ENCODE measurements at regions of chr16 and their contacts with region 1.

Region 1: GRCh38 chr16:30032083-30032819 is 1.2 kb upstream of the TLCD3B start:
- DNase-seq: peak; percentile 86
- ATAC-seq: peak; percentile 55
- H3K4me3 Mint-ChIP-seq: peak overlapping the region; percentile 79
- H3K27ac Mint-ChIP-seq: no peak overlapping the region
- H3K4me1 Mint-ChIP-seq: peaks cover 35% of the 10 kb centered on the region
- H3K27me3 Mint-ChIP-seq: peaks cover 50% of the 10 kb centered on the region
- CTCF ChIP-seq: peak; percentile 89

Region 2: GRCh38 chr16:29790183-29790952 is 241.9 kb before region 1 on chr16 and contains the start of gene KIF22:
- CTCF ChIA-PET with region 1: interaction called, 13 read pairs
- POLR2A ChIA-PET with region 1: interaction called, 3 read pairs
- DNase-seq: peak; percentile 100
- ATAC-seq: peak; percentile 96
- H3K4me3 Mint-ChIP-seq: peak within 1 kb of the TSS; percentile 98
- H3K27ac Mint-ChIP-seq: peak within 1 kb of the TSS; percentile 97
- H3K4me1 Mint-ChIP-seq: peaks cover 25% of the 10 kb centered on the region
- H3K27me3 Mint-ChIP-seq: peaks cover 19% of the 10 kb centered on the region
- CTCF ChIP-seq: no peak
- total RNA-seq, gene KIF22: 165 to 182 TPM (median 175 TPM) in 3 replicates

Region 3: GRCh38 chr16:29848420-29849297 is 183.6 kb before region 1 on chr16:
- CTCF ChIA-PET with region 1: interaction called, 37 read pairs
- POLR2A ChIA-PET with region 1: no interaction called
- DNase-seq: peak; percentile 86
- ATAC-seq: peak; percentile 79
- H3K4me3 Mint-ChIP-seq: no peak overlapping the region
- H3K27ac Mint-ChIP-seq: no peak overlapping the region
- H3K4me1 Mint-ChIP-seq: peaks cover 10% of the 10 kb centered on the region
- H3K27me3 Mint-ChIP-seq: no peaks in the 10 kb centered on the region; the same call in 1 of the 2 replicates
- CTCF ChIP-seq: peak; percentile 78

Region 4: DNA sequence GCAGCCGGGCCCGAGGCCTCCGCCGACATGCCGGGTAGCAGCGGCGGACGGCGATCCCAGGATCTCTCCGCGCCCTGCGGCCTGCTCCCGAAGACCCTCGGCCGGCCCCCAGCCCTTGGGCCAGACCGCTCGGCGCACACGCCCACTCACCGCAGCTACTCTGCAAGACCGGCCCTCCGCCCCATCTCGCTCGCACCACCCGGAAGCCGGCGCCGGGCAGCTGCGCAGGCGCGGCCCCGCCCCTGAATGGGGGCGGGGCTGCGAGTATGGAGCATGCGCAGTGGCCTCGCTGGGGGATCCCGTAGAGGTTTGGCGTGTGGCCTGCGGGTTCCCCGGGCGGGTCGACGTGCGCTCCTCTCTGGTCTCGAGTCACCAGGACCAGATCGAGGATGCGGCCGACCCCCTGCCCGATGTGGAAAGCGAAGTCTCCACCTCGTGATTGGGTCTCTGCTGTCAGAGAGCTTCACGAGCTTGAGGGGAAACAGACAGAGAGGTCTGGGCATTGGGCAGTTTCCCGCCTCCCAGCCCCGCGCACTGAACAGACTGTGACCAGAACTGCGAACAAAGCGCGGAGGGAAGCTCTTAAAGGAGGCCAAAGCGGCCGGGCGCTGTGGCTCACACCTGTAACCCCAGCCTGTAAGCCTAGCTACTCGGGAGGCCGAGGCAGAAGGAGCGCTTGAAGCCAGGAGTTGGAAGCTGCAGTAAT is 106.1 kb before region 1 on chr16 and contains the start of gene KCTD13:
- CTCF ChIA-PET with region 1: interaction called, 16 read pairs
- POLR2A ChIA-PET with region 1: no interaction called
- DNase-seq: peak; percentile 91
- ATAC-seq: peak; percentile 95
- H3K4me3 Mint-ChIP-seq: peak within 1 kb of the TSS; percentile 93
- H3K27ac Mint-ChIP-seq: peak within 1 kb of the TSS; percentile 97
- H3K4me1 Mint-ChIP-seq: peaks cover 18% of the 10 kb centered on the region
- H3K27me3 Mint-ChIP-seq: no peaks in the 10 kb centered on the region; the same call in 1 of the 2 replicates
- CTCF ChIP-seq: no peak
- total RNA-seq, gene KCTD13: 18.5 to 20.9 TPM (median 19.4 TPM) in 3 replicates

Region 5: DNA sequence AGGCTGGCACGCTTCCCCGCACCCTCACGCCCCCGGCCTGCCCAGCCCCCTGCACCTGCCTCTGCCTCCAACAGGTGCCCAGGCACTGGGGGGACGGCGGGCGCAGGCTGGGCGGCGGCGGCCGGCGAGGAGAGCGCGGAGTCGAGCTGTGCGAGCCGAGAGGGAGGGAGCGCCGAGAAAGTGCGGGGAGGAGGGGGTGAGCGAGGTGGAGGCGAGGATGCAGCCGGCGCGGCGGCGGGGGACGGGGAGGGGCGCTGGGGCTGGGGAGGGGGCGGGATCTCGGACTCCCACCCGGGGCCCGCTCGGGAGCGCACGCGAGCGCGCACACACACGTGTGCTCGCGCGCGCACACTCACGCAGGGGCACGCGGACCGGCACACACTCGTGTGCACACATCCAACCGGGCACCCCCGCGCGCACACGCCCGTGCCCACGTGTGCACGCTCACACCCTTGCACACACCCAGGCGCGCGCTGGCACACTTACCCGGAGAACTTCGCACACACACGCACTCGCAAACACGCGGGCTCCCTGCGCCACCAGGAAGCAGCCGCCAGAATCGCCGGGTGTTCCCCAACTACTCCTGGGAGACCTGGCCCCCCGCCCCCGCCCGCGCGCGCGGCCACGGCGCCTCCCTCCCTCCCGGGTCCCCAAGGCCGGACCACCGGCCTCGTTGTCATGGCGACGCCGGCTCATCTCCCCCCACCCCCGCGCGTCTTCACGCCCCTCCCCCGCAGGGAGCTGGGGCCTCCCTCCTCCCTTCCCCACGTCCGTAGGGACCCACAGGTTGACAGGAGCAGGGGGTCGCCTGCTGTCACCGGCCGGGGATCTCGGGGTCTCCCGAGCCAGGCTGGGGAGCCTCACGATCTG is 21.2 kb before region 1 on chr16 and contains the start of gene DOC2A:
- CTCF ChIA-PET with region 1: interaction called, 29 read pairs
- POLR2A ChIA-PET with region 1: no interaction called
- DNase-seq: peak; percentile 73
- ATAC-seq: peak; percentile 51
- H3K4me3 Mint-ChIP-seq: peak within 1 kb of the TSS; percentile 88
- H3K27ac Mint-ChIP-seq: no peak within 1 kb of the TSS
- H3K4me1 Mint-ChIP-seq: peaks cover 17% of the 10 kb centered on the region
- H3K27me3 Mint-ChIP-seq: peaks cover 26% of the 10 kb centered on the region
- CTCF ChIP-seq: no peak
- total RNA-seq, gene DOC2A: 10.8 to 16.6 TPM (median 16.4 TPM) in 3 replicates

Region 6: DNA sequence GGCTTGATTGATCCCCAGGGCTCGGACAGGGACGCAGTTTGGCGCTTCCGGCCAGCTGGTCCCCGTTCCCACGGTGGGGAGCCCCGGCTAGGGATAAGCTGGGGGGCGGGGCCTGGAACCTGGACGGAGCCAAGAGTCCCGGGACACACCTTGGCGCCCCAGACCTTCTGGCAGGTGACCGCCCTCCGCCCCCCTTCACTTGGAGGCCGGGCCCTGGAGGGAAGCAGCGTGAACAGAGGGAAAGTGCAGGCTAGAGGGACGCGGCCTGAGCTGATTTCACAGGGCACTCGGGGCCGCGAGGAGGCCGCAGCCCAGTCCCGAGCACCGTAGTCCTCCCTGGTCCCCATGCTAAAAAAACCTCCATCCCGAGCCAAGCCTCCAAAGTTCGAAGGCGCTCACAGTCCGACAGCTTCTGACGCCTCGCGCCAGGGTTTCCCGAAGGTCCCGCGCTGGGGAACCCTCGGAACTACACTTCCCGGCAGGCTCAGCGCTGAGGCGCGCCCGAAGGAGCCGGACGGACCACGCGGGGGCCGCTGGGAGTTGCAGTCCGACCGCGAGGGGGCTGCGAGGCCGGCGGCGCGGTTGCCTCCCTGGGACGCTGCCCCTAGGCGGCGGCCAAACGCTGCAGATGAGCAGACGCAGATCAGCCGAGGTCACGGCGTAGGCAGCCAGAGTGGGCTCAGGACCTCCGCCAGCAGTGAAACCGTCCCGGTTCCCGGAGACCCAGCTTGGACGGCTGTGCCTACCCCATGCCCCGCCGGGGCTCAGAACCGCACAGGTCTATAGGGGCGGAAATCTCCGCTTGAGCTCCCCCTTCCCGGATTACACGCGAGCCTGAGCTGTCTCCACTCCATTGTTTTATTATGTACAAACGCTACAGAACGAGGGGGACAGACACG is 59.5 kb after region 1 on chr16 and contains the start of gene TBX6:
- CTCF ChIA-PET with region 1: interaction called, 17 read pairs
- POLR2A ChIA-PET with region 1: no interaction called
- DNase-seq: peak; percentile 97
- ATAC-seq: peak; percentile 69
- H3K4me3 Mint-ChIP-seq: peak within 1 kb of the TSS; percentile 87
- H3K27ac Mint-ChIP-seq: peak within 1 kb of the TSS; percentile 98
- H3K4me1 Mint-ChIP-seq: peaks cover 27% of the 10 kb centered on the region
- H3K27me3 Mint-ChIP-seq: peaks cover 3% of the 10 kb centered on the region
- CTCF ChIP-seq: no peak
- total RNA-seq, gene TBX6: 5.1 to 7.6 TPM (median 6.6 TPM) in 3 replicates

Region 7: DNA sequence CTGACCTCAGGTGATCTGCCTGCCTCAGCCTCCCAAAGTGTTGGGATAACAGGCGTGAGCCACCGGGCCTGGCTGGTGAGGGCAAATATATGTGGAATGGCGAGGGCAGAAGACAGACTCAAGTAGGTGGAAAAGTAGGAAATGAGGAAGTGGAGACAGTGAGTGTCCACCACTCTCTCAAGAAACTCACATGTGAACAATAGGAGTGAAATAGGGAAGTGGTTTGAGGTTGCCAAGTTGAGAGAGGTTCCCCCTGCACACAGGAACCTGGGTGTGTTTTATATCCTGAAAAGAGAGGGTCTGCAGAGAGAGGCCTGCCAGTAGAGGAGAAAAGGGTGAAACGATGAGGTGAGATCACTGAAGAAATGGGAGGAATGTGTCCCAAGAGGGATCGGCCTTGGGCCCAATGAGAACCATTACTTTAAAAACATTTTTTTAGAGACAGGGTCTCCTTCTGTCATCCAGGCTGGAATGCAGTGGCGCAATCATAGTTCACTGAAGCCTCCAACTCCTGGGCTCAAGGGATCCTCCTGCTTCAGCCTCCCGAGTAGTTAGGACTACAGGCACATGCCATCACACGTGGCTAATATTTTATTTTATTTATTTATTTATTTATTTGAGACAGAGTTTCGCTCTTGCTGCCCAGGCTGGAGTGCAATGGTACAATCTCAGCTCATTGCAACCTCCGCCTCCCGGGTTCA is 134.1 kb after region 1 on chr16:
- CTCF ChIA-PET with region 1: no interaction called
- POLR2A ChIA-PET with region 1: no interaction called
- DNase-seq: no peak
- ATAC-seq: no peak
- H3K4me3 Mint-ChIP-seq: no peak overlapping the region
- H3K27ac Mint-ChIP-seq: no peak overlapping the region
- H3K4me1 Mint-ChIP-seq: no peaks in the 10 kb centered on the region
- H3K27me3 Mint-ChIP-seq: peaks cover 21% of the 10 kb centered on the region
- CTCF ChIP-seq: no peak

Measured in WTC11 (cell line).